Natural killer cell (primary cell): ENCODE measurements at regions of chr1 and their contacts with region 1.

Region 1: GRCh38 chr1:18597160-18598042 is 33.2 kb upstream of the PAX7 start:
- DNase-seq: peak; percentile 24 to 75
- ATAC-seq: peak in 2 of 3 donors; percentile 46 to 75
- H3K4me3 ChIP-seq: no peak overlapping the region
- H3K4me3 Mint-ChIP-seq: no peak overlapping the region
- H3K27ac ChIP-seq: no peak overlapping the region
- H3K27ac Mint-ChIP-seq: no peak overlapping the region
- H3K4me1 ChIP-seq: no peaks in the 10 kb centered on the region
- H3K4me1 Mint-ChIP-seq: no peaks in the 10 kb centered on the region
- H3K27me3 ChIP-seq: no peaks in the 10 kb centered on the region
- H3K27me3 Mint-ChIP-seq: peaks cover 8 to 18% of the 10 kb centered on the region in 2 donors
- CTCF ChIP-seq: peak; percentile 64

Region 2: DNA sequence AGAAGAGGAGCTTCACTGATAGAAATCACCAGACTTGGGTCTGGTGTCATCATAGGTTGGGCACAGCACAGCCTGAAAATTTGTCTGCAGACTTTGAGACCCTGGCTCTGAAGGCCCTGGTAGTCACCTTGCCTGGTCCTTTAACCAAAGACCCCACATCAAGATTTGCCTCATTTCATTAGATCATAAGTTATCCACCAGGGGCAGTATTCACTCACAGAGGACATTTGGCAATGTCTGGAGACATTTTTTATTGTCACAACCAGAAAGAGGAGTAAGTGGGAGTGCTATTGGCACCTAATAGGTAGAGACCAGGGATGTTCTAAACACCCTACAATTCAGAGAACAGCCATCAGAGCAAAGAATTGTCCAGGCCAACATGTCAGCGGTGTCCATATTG is 11.1 kb after region 1 on chr1:
- intact Hi-C with region 1: no loop called
- DNase-seq: no peak
- ATAC-seq: no peak
- H3K4me3 ChIP-seq: no peak overlapping the region
- H3K4me3 Mint-ChIP-seq: no peak overlapping the region
- H3K27ac ChIP-seq: no peak overlapping the region
- H3K27ac Mint-ChIP-seq: no peak overlapping the region
- H3K4me1 ChIP-seq: no peaks in the 10 kb centered on the region
- H3K4me1 Mint-ChIP-seq: no peaks in the 10 kb centered on the region
- H3K27me3 ChIP-seq: no peaks in the 10 kb centered on the region
- H3K27me3 Mint-ChIP-seq: peaks cover 7 to 28% of the 10 kb centered on the region in 2 donors
- CTCF ChIP-seq: no peak

Region 3: DNA sequence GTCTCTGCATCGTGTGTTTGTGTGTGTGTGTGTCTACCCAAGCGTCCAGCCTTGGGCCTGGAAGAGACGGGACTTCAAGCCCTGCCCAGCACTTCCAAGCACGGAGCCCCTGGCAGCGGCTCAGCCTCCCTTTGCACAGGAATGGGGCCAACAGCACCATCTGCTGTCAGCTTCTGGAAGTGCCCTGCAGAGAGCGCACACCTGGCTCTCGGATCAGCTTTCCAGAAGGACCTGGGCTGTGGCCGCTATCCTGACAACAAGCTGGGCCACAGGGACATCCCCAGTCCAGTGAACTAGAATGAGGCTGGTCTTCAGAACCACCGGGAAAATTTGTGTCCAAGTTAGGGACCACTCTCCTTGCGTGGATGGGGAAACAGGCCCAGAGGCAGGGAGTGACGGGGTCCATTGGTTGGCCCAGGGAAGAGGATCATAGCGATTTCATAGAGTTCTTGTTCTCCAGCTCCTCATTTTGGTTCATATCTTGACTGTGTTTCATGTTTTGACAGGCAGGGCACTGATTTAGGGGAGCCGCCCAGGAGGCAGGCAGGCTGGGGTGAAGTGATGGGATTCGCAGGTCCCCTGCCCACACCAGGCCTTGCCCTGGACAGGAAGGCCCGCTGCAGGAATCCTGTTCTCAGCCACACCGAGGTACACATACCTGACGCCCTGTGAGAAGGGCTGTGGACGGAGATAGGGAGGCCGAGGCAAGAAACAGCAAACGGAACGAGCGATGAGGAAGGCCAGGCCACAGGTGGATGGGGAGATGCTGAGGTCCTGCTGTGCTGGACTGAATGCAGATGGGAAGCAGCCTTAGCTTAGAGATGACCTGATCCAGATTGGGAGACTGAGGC is 223.6 kb after region 1 on chr1:
- intact Hi-C with region 1: loop called (anchors 2 kb)
- DNase-seq: peak; percentile 54 to 73
- ATAC-seq: peak in 2 of 3 donors; percentile 54 to 62
- H3K4me3 ChIP-seq: no peak overlapping the region
- H3K4me3 Mint-ChIP-seq: no peak overlapping the region
- H3K27ac ChIP-seq: no peak overlapping the region
- H3K27ac Mint-ChIP-seq: peak overlapping the region in 1 of 2 donors; percentile 12
- H3K4me1 ChIP-seq: peaks cover 17% of the 10 kb centered on the region
- H3K4me1 Mint-ChIP-seq: peaks cover 30 to 45% of the 10 kb centered on the region in 2 donors
- H3K27me3 ChIP-seq: peaks cover 7% of the 10 kb centered on the region
- H3K27me3 Mint-ChIP-seq: peaks cover 29 to 37% of the 10 kb centered on the region in 2 donors
- CTCF ChIP-seq: peak; percentile 73

Region 4: GRCh38 chr1:18875107-18875795 is 277.9 kb after region 1 on chr1:
- intact Hi-C with region 1: loop called (anchors 1 kb)
- DNase-seq: peak; percentile 66 to 78
- ATAC-seq: peak; percentile 70 to 87 (median 80)
- H3K4me3 ChIP-seq: no peak overlapping the region
- H3K4me3 Mint-ChIP-seq: no peak overlapping the region
- H3K27ac ChIP-seq: no peak overlapping the region
- H3K27ac Mint-ChIP-seq: no peak overlapping the region
- H3K4me1 ChIP-seq: no peaks in the 10 kb centered on the region
- H3K4me1 Mint-ChIP-seq: no peaks in the 10 kb centered on the region
- H3K27me3 ChIP-seq: no peaks in the 10 kb centered on the region
- H3K27me3 Mint-ChIP-seq: no peaks in the 10 kb centered on the region
- CTCF ChIP-seq: peak; percentile 75